Activated CD8-positive, alpha-beta T cell treated with anti-CD3 and anti-CD28 coated beads, Interleukin-2, amount 10 ng/mL, durations not matched to agents 7 days and 5 days (primary cell): ENCODE measurements at regions of chr10 and their contacts with region 1.

Region 1: DNA sequence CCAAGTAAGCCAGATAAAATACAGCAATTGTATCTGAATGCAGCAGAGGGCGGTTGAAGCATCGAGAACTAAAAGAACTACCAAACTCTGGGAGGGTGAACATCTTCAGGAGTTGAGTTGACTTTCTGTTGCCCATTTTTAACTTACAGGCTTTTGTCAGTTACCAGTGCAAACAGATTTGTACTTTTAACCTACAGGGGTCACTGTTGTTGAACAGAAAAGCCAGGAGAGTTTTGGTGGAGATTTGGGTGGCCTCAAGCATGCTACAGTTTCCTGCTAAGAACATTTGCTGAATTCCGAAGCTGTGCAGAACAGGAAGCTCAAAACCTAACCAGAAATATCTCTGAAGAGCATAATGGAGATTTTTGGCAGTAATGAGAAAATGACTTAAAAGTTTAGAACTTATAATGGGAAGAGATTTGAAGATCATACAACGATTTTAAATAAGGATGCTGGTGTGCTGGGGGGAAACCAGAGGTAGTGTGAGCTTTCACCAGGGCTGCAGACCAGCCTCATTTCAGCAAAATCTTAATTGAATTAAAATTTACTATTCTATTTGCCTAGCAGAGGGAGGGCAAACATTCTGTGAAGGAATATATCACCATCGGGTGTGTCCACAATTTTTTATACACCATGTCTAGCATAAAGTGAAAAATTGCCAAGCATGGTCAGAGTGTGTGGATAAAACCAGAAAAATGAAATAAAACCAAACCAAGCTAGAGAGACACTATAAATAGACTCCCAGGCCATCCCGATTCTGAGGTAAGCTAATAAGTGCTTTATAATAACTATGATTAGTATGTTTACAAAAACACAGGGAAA is 208.6 kb upstream of the CCDC6 start:
- DNase-seq: peak; percentile 31
- ATAC-seq: peak; percentile 60
- H3K4me3 Mint-ChIP-seq: no peak overlapping the region
- H3K27ac Mint-ChIP-seq: no peak overlapping the region
- H3K4me1 Mint-ChIP-seq: no peaks in the 10 kb centered on the region
- H3K27me3 Mint-ChIP-seq: no peaks in the 10 kb centered on the region

Region 2: GRCh38 chr10:60096761-60097513 is 18.0 kb before region 1 on chr10:
- CTCF ChIA-PET with region 1: interaction called, 11 read pairs
- POLR2A ChIA-PET with region 1: no interaction called
- DNase-seq: no peak
- ATAC-seq: no peak
- H3K4me3 Mint-ChIP-seq: no peak overlapping the region
- H3K27ac Mint-ChIP-seq: no peak overlapping the region
- H3K4me1 Mint-ChIP-seq: no peaks in the 10 kb centered on the region
- H3K27me3 Mint-ChIP-seq: peaks cover 7% of the 10 kb centered on the region

Region 3: GRCh38 chr10:60155943-60156683 is 41.1 kb after region 1 on chr10:
- CTCF ChIA-PET with region 1: no interaction called
- POLR2A ChIA-PET with region 1: no interaction called
- DNase-seq: no peak
- ATAC-seq: no peak
- H3K4me3 Mint-ChIP-seq: no peak overlapping the region
- H3K27ac Mint-ChIP-seq: no peak overlapping the region
- H3K4me1 Mint-ChIP-seq: no peaks in the 10 kb centered on the region
- H3K27me3 Mint-ChIP-seq: no peaks in the 10 kb centered on the region

Region 4: GRCh38 chr10:60208676-60209269 is 93.8 kb after region 1 on chr10:
- CTCF ChIA-PET with region 1: interaction called, 35 read pairs
- POLR2A ChIA-PET with region 1: no interaction called
- DNase-seq: no peak
- ATAC-seq: no peak
- H3K4me3 Mint-ChIP-seq: no peak overlapping the region
- H3K27ac Mint-ChIP-seq: no peak overlapping the region
- H3K4me1 Mint-ChIP-seq: peaks cover 32% of the 10 kb centered on the region
- H3K27me3 Mint-ChIP-seq: peaks cover 9% of the 10 kb centered on the region

Region 5: GRCh38 chr10:60224066-60224705 is 109.2 kb after region 1 on chr10:
- CTCF ChIA-PET with region 1: no interaction called
- POLR2A ChIA-PET with region 1: no interaction called
- DNase-seq: no peak
- ATAC-seq: no peak
- H3K4me3 Mint-ChIP-seq: no peak overlapping the region
- H3K27ac Mint-ChIP-seq: no peak overlapping the region
- H3K4me1 Mint-ChIP-seq: no peaks in the 10 kb centered on the region
- H3K27me3 Mint-ChIP-seq: no peaks in the 10 kb centered on the region

Region 6: DNA sequence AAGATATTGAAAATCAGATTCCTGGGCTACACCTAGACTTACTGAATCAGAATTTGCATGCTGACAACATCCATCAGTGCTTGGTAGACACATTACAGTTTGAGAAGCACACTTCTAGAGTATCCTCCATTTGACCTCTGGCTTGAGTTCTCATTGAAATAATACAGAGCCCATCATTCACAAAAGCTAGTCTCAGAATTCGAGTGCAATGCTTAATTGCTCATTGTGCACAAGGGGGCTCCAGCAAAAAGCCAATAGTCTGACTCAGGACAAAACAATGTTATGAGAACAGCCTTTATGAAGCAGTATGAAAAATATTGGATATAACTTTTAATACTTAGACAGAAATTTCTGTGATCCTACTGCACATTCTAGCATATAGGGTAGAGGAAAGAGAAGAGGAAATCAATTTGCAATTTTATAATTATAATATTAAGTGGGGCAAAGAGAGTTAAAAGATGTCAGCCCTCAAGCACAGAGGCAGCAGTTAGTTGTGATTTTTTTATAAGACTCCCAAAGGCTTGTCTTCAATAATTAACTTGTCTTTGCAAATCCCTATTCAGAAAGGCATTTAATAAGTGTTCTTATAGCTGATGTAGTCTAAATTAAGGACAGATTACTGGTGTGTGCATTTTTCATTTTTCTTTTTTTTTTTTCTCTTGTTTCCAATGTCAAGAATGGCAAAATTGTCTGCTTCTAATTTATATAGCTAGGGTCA is 380.5 kb after region 1 on chr10:
- CTCF ChIA-PET with region 1: no interaction called
- POLR2A ChIA-PET with region 1: no interaction called
- DNase-seq: no peak
- ATAC-seq: no peak
- H3K4me3 Mint-ChIP-seq: no peak overlapping the region
- H3K27ac Mint-ChIP-seq: no peak overlapping the region
- H3K4me1 Mint-ChIP-seq: no peaks in the 10 kb centered on the region
- H3K27me3 Mint-ChIP-seq: no peaks in the 10 kb centered on the region